HepG2 (cell line): ENCODE measurements at regions of chr2 and their contacts with region 1.

Region 1: GRCh38 chr2:110874453-110875383 is 142.3 kb downstream of the ACOXL start:
- DNase-seq: no peak
- ATAC-seq: peak; percentile 25; the same call in 2 of the 3 replicates
- H3K4me3 ChIP-seq: no peak overlapping the region
- H3K27ac ChIP-seq: no peak overlapping the region
- H3K4me1 ChIP-seq: no peaks in the 10 kb centered on the region
- H3K27me3 ChIP-seq: peaks cover 0 to 23% of the 10 kb centered on the region in 2 experiments; a peak in 3 of 5 replicates
- CTCF ChIP-seq: no peak
- EP300 ChIP-seq: no peak
- POLR2A ChIP-seq: no peak
- RAD21 ChIP-seq: no peak

Region 2: GRCh38 chr2:109213646-109214417 is 1660.9 kb before region 1 on chr2:
- CTCF ChIA-PET with region 1: no interaction called
- POLR2A ChIA-PET with region 1: no interaction called
- in situ Hi-C with region 1: no loop called
- intact Hi-C with region 1: loop called (anchors 5 kb)
- DNase-seq: no peak
- ATAC-seq: no peak
- H3K4me3 ChIP-seq: no peak overlapping the region
- H3K27ac ChIP-seq: no peak overlapping the region
- H3K4me1 ChIP-seq: peaks cover 31% of the 10 kb centered on the region
- H3K27me3 ChIP-seq: peaks cover 0 to 9% of the 10 kb centered on the region in 2 experiments; a peak in 2 of 5 replicates
- CTCF ChIP-seq: no peak
- EP300 ChIP-seq: no peak
- POLR2A ChIP-seq: no peak
- RAD21 ChIP-seq: no peak